ENCODE measurements at regions of chr3 and their contacts with region 1.

Region 1: GRCh38 chr3:72665701-72666443 is 182.4 kb downstream of the SHQ1 start:
- DNase-seq: no peak
- ATAC-seq: peak; percentile 50
- H3K4me3 Mint-ChIP-seq: no peak overlapping the region
- H3K27ac Mint-ChIP-seq: no peak overlapping the region
- H3K4me1 Mint-ChIP-seq: no peaks in the 10 kb centered on the region
- H3K27me3 Mint-ChIP-seq: peaks cover 6% of the 10 kb centered on the region
- CTCF ChIP-seq: no peak

Region 2: GRCh38 chr3:72682936-72683452 is 17.1 kb after region 1 on chr3:
- CTCF ChIA-PET with region 1: interaction called, 11 read pairs
- POLR2A ChIA-PET with region 1: no interaction called
- intact Hi-C with region 1: no loop called
- DNase-seq: no peak
- ATAC-seq: no peak
- H3K4me3 Mint-ChIP-seq: no peak overlapping the region
- H3K27ac Mint-ChIP-seq: no peak overlapping the region
- H3K4me1 Mint-ChIP-seq: peaks cover 4% of the 10 kb centered on the region
- H3K27me3 Mint-ChIP-seq: peaks cover 8% of the 10 kb centered on the region
- CTCF ChIP-seq: no peak

Measured in activated B cell treated with CpG ODN at 0.5 μM for 24 hours (primary cell).